Mammary epithelial cell (primary cell): ENCODE measurements at regions of chr12 and their contacts with region 1.

Region 1: DNA sequence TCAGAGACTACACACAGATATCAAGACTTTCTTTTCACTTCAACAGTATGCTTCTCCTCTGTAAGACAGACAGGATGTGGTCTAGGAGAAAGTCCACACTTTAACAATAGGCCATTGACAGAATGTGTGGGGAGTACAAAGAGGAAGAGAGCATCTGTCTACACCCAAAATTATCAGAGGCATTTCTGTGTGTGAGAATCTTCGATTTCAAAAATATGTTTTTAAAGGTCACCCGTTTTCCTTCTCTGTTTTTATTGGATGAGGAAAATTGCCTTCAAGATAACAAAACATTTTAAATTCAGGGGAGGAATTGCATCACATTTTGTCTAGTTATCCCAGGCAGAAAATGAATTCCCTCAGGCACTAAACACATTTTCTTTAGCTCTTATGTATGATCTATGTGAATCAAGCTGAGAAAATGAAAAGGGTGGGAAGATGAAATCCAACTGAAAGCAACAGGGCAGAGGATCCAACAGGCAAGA is 16.4 kb downstream of the NAV3 start:
- DNase-seq: peak; percentile 67
- H3K4me3 ChIP-seq: peak overlapping the region in 1 of 3 experiments; percentile 0
- H3K27ac ChIP-seq: peak overlapping the region; percentile 65
- H3K4me1 ChIP-seq: peaks cover 31% of the 10 kb centered on the region
- H3K27me3 ChIP-seq: no peaks in the 10 kb centered on the region
- CTCF ChIP-seq: no peak

Region 2: GRCh38 chr12:77865178-77865577 is 18.1 kb after region 1 on chr12:
- CTCF ChIA-PET with region 1: no interaction called
- dilution Hi-C with region 1: no loop called
- in situ Hi-C with region 1: no loop called
- intact Hi-C with region 1: no loop called
- DNase-seq: no peak
- H3K4me3 ChIP-seq: no peak overlapping the region
- H3K27ac ChIP-seq: no peak overlapping the region
- H3K4me1 ChIP-seq: no peaks in the 10 kb centered on the region
- H3K27me3 ChIP-seq: no peaks in the 10 kb centered on the region
- CTCF ChIP-seq: no peak

Region 3: GRCh38 chr12:77925536-77926108 is 78.5 kb after region 1 on chr12:
- CTCF ChIA-PET with region 1: interaction called, 3 read pairs
- dilution Hi-C with region 1: no loop called
- in situ Hi-C with region 1: no loop called
- intact Hi-C with region 1: loop called (anchors 2 kb)
- DNase-seq: peak; percentile 77
- H3K4me3 ChIP-seq: no peak overlapping the region
- H3K27ac ChIP-seq: no peak overlapping the region
- H3K4me1 ChIP-seq: peaks cover 5% of the 10 kb centered on the region
- H3K27me3 ChIP-seq: no peaks in the 10 kb centered on the region
- CTCF ChIP-seq: peak; percentile 98 to 99

Region 4: GRCh38 chr12:77979597-77980250 is 132.6 kb after region 1 on chr12:
- CTCF ChIA-PET with region 1: no interaction called
- dilution Hi-C with region 1: no loop called
- in situ Hi-C with region 1: no loop called
- intact Hi-C with region 1: no loop called
- DNase-seq: no peak
- H3K4me3 ChIP-seq: no peak overlapping the region
- H3K27ac ChIP-seq: no peak overlapping the region
- H3K4me1 ChIP-seq: no peaks in the 10 kb centered on the region
- H3K27me3 ChIP-seq: no peaks in the 10 kb centered on the region
- CTCF ChIP-seq: no peak